ENCODE measurements at regions of chr12 and their contacts with region 1.

Region 1: GRCh38 chr12:68331869-68332727 is at the start of gene MDM1:
- DNase-seq: peak; percentile 98
- H3K4me3 Mint-ChIP-seq: peak within 1 kb of the TSS; percentile 88
- H3K27ac Mint-ChIP-seq: peak within 1 kb of the TSS; percentile 81
- H3K4me1 Mint-ChIP-seq: peaks cover 37% of the 10 kb centered on the region
- H3K27me3 Mint-ChIP-seq: peaks cover 9% of the 10 kb centered on the region
- total RNA-seq, gene MDM1: 23.2 and 24.9 TPM in 2 replicates

Region 2: DNA sequence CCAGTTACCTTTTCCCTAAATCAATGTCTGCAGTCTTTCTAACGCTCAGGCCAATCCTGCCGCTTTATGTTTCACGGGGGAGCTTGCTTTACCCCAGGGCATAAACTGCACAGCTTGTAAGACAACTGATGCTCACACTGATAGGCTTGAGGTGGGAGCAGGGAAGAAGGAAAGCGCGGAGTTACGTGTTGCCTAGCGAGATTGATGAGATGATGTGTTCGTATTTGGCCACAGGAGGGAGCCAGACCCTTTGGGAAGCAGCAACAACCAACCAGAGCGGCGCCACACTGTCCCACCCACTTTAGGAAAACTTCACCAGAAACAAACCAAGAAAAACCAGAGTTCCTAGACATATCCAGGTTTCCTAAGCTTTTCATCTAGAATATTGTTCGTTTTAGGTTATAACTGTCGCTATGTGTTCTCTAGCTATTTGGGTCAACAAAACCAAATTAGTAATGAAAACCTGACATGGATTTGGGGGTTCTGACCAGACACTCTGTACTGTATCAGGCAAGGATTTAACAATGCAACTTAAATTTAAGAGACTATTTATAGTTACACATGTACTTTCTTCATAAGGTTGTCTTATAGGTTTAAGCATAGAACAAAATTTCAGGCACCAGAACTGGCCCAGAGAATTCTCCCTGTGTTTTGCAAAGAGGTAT is 108.9 kb before region 1 on chr12:
- intact Hi-C with region 1: loop called (anchors 5 kb)
- DNase-seq: peak; percentile 91
- H3K4me3 Mint-ChIP-seq: peak overlapping the region; percentile 75
- H3K27ac Mint-ChIP-seq: peak overlapping the region; percentile 81
- H3K4me1 Mint-ChIP-seq: peaks cover 17% of the 10 kb centered on the region
- H3K27me3 Mint-ChIP-seq: peaks cover 14% of the 10 kb centered on the region

Region 3: DNA sequence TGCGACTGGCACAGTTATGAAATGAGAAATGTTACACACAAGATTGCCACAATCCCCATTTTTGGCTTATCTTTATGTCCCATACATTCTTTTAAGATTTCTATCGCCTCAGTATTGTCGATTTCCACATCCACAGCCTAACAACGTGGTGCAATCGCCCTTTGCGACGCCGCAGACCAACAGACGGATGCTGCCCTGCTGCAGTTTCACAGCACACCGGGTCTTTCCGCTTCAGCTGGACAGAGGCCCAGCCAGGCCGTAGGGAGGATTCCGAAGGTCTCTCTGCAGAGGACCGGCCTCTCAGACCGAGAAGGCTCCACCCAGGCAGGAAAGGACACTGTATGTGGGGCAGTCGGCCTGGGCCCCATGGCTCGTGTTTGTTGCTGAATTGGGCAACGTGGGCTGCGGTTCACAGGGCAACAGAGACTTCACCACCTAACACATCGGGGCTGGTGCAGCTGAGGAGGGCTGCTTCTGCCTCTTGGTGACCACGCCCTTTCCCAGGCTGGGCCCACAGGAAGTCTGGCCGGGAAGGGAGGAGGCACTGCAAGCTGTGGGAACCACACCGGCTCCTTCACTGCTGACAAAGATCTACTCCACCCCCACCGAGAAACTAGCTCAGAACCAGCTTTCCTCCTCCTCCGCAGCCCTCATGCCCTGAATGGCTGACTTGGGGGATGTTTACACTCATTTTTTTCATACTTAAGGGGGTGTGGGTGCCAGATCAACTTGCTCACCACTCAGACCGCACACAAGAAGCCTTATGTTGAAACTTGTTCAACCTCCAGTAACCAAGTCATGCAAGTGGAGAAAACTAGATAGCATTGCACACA is 33.0 kb after region 1 on chr12:
- intact Hi-C with region 1: loop called (anchors 1 kb)
- DNase-seq: peak; percentile 95
- H3K4me3 Mint-ChIP-seq: peak overlapping the region; percentile 83
- H3K27ac Mint-ChIP-seq: peak overlapping the region; percentile 95
- H3K4me1 Mint-ChIP-seq: peaks cover 56% of the 10 kb centered on the region
- H3K27me3 Mint-ChIP-seq: no peaks in the 10 kb centered on the region

Region 4: GRCh38 chr12:68686595-68687521 is 354.8 kb after region 1 on chr12 and contains the start of gene NUP107:
- intact Hi-C with region 1: loop called (anchors 1 kb)
- DNase-seq: peak; percentile 99
- H3K4me3 Mint-ChIP-seq: peak within 1 kb of the TSS; percentile 95
- H3K27ac Mint-ChIP-seq: peak within 1 kb of the TSS; percentile 92
- H3K4me1 Mint-ChIP-seq: peaks cover 33% of the 10 kb centered on the region
- H3K27me3 Mint-ChIP-seq: no peaks in the 10 kb centered on the region
- total RNA-seq, gene NUP107: 127 and 128 TPM in 2 replicates

Region 5: DNA sequence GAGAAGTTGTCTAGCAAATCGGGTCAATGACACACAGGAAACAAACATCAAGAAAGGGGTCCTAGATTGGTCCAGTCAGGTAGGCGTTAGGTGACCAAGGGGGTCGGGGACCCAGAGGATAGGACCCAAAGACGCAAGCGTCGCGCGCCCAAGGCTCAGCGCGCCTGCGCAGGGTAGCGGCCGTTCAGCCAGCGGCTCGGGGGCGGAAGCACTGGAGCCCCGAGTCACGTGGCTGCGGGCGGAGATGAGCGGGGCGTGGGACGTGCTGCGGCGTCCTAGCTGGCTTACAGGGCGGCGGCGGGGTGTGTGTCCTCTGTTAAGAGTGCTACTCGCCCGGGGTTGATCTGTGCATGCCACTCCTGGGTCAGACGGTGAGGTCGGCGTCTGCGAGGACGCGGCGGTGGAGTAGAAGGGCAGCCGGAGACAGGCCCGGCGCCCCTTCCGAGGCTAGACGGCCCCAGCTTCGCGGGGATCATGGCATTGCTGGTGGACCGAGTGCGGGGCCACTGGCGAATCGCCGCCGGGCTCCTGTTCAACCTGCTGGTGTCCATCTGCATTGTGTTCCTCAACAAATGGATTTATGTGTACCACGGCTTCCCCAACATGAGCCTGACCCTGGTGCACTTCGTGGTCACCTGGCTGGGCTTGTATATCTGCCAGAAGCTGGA is 413.9 kb after region 1 on chr12 and contains the start of gene SLC35E3:
- intact Hi-C with region 1: loop called (anchors 2 kb)
- DNase-seq: peak; percentile 98
- H3K4me3 Mint-ChIP-seq: peak within 1 kb of the TSS; percentile 93
- H3K27ac Mint-ChIP-seq: peak within 1 kb of the TSS; percentile 80
- H3K4me1 Mint-ChIP-seq: peaks cover 38% of the 10 kb centered on the region
- H3K27me3 Mint-ChIP-seq: no peaks in the 10 kb centered on the region
- total RNA-seq, gene SLC35E3: 3.8 and 4.2 TPM in 2 replicates

Measured in activated CD4-positive, alpha-beta T cell treated with anti-CD3 and anti-CD28 coated beads, Interleukin-2, amount 10 ng/mL, durations not matched to agents 24 days and 14 days (primary cell).